Activated CD4-positive, alpha-beta T cell treated with anti-CD3 and anti-CD28 coated beads for 36 hours (primary cell): ENCODE measurements at regions of chr17 and their contacts with region 1.

Region 1: DNA sequence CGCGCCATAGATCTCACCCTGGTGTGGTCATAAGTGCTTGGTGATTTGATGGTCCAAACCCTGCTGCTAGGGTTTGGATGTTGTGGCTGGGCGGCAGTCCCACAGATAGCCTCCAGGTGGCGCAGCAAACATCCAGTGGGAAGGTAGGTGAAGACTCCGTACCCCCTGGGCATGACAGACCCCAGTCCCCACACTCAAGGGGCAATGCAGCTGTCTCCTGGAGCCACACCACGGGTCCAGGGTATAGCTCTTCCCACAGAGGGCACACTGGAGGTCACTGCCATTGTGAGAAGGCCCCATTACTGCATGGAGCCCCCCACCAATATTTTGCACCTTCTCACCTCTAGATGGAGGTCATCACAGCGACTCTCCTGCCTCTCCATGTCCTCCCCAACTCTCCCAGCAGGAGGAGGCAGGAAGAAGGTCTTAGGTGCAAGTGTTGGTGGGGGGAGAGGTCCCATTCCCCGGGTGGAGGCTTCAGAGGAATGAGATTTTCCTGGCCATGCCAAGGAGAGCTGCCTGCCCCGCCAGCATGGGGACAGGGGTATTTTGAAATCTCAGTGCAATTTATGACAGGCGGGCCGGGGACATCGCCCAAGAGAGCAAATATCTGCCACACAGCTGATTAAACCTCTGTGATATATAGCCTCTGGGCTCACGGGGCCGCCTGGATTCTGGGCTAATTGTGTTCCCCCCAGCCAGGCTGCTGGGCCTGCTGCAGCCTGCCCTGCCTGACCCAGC is 17.1 kb upstream of the C17orf113 start:
- DNase-seq: peak; percentile 85
- ATAC-seq: peak; percentile 62
- H3K4me3 Mint-ChIP-seq: no peak overlapping the region
- H3K27ac Mint-ChIP-seq: no peak overlapping the region
- H3K4me1 Mint-ChIP-seq: peaks cover 21% of the 10 kb centered on the region
- H3K27me3 Mint-ChIP-seq: peaks cover 9% of the 10 kb centered on the region

Region 2: DNA sequence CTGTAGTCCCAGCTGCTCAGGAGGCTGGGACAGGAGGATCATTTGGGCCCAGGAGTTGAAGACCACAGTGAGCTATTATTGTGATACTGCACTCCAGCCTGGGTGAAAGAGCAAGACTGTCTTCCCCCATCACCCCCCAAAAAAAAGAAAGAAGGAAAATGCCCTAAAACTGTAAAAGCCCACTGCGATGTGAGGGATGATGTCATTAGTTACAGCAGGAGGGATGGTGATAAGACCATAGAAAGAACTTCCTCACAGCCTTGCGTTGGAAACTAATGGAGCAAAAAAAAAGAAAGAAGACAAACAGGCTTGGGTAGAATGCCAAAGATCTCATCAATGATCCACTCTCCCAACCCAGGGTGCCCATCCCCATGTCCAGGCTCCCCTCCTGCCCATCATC is 12.0 kb after region 1 on chr17:
- CTCF ChIA-PET with region 1: interaction called, 10 read pairs
- POLR2A ChIA-PET with region 1: no interaction called
- intact Hi-C with region 1: no loop called
- DNase-seq: no peak
- ATAC-seq: no peak
- H3K4me3 Mint-ChIP-seq: no peak overlapping the region
- H3K27ac Mint-ChIP-seq: no peak overlapping the region
- H3K4me1 Mint-ChIP-seq: no peaks in the 10 kb centered on the region
- H3K27me3 Mint-ChIP-seq: no peaks in the 10 kb centered on the region

Region 3: DNA sequence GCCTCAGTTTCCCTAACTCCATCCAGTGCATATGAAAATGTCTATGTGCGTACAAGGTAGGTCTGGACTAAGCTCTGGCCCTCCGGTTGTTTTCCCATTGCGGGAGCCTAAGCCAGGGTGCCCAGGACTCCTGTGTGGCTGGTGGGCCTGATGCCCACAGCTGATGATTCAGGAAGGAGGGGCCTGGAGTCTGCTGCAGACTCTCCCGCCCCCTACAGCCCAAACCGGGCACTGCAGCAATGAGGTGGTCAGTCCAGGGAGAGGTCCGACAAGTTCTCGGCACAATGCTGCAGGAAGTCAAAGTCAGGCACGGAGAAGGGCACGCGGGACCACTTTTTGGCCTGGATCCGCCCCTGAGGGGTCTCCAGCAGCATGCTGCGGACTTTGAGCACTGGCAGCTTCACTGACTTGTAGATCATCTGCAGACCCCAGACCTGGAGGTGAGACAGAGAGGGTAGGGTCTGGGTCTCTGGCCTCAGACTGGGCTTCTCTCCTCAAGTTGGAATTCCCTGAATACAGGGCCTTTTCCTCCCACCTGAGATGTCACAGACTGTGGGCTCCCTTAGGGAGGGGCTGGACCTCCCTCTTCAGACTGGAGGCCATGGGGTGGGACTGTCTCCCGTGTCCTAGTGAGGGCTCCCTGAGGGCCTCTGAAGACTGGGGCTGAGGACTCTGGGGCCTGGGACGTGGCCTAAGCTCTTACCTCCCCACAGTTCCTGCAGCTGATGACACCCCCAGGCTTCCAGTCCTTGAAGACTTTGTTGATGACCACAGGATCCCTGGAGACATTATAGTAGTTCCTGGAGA is 34.2 kb after region 1 on chr17:
- CTCF ChIA-PET with region 1: interaction called, 8 read pairs
- POLR2A ChIA-PET with region 1: no interaction called
- intact Hi-C with region 1: loop called (anchors 1 kb)
- DNase-seq: peak; percentile 88
- ATAC-seq: peak; percentile 73
- H3K4me3 Mint-ChIP-seq: no peak overlapping the region
- H3K27ac Mint-ChIP-seq: no peak overlapping the region
- H3K4me1 Mint-ChIP-seq: peaks cover 8% of the 10 kb centered on the region
- H3K27me3 Mint-ChIP-seq: peaks cover 12% of the 10 kb centered on the region

Region 4: GRCh38 chr17:42405963-42406495 is 338.5 kb after region 1 on chr17:
- CTCF ChIA-PET with region 1: no interaction called
- POLR2A ChIA-PET with region 1: no interaction called
- intact Hi-C with region 1: loop called in 1 of 2 experiments (anchors 1 kb)
- DNase-seq: peak; percentile 91
- ATAC-seq: peak; percentile 69
- H3K4me3 Mint-ChIP-seq: no peak overlapping the region
- H3K27ac Mint-ChIP-seq: no peak overlapping the region
- H3K4me1 Mint-ChIP-seq: peaks cover 19% of the 10 kb centered on the region
- H3K27me3 Mint-ChIP-seq: no peaks in the 10 kb centered on the region